Mammary epithelial cell (primary cell): ENCODE measurements at regions of chr10 and their contacts with region 1.

Region 1: GRCh38 chr10:59748834-59749233 is 4.4 kb downstream of the MRLN start:
- DNase-seq: peak; percentile 13
- H3K4me3 ChIP-seq: no peak overlapping the region
- H3K27ac ChIP-seq: no peak overlapping the region
- H3K4me1 ChIP-seq: no peaks in the 10 kb centered on the region
- H3K27me3 ChIP-seq: no peaks in the 10 kb centered on the region
- CTCF ChIP-seq: no peak

Region 2: GRCh38 chr10:59700709-59701108 is 48.1 kb before region 1 on chr10:
- CTCF ChIA-PET with region 1: no interaction called
- dilution Hi-C with region 1: no loop called
- in situ Hi-C with region 1: no loop called
- intact Hi-C with region 1: no loop called
- DNase-seq: no peak
- H3K4me3 ChIP-seq: no peak overlapping the region
- H3K27ac ChIP-seq: no peak overlapping the region
- H3K4me1 ChIP-seq: no peaks in the 10 kb centered on the region
- H3K27me3 ChIP-seq: peaks cover 2% of the 10 kb centered on the region
- CTCF ChIP-seq: no peak

Region 3: DNA sequence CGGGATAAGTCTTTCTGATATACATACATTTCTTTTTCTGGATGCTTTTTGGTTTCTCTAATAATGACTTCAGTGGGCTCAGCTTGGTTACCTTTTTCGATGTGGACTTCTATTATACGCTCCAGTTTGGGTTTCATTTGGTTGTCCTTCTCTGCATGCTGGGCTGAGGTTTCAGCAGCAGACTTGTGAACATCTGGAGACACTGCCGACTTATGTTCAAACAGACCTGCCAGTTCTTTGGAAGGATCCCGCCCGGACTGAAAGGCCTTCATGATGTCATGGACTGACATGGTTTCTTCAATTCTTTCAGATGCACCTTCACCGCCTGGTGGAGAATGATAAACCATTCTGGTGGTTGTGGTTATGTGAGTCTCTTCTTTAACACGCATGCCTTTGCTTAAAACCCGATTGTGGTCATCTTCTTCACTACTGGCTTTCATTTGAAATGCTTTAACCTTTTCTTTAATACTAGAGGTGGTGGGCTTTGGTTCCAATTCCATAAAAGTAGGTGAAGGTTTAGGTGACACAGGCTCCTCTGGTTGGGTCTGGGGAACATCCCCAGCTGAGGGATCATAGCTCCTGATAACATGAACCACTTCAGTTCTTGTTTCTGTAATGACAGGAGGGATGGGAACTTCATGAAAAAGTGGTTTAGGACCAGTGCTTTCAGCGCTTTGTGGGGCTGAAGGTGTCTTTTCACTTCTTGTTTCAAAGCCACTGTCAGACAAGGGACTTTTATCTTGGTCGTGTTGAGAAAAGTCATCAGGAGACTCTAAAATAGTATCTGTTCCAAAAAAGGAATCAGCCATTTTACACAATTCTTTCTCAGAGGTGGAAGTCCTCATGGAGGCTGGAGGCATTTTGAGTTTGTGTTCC is 325.2 kb after region 1 on chr10:
- CTCF ChIA-PET with region 1: no interaction called
- dilution Hi-C with region 1: loop called (anchors 25 kb)
- in situ Hi-C with region 1: no loop called
- intact Hi-C with region 1: no loop called
- DNase-seq: no peak
- H3K4me3 ChIP-seq: no peak overlapping the region
- H3K27ac ChIP-seq: no peak overlapping the region
- H3K4me1 ChIP-seq: no peaks in the 10 kb centered on the region
- H3K27me3 ChIP-seq: no peaks in the 10 kb centered on the region
- CTCF ChIP-seq: no peak